Gastrocnemius medialis (tissue), 4 donors: ENCODE measurements at regions of chr18 and their contacts with region 1.

Region 1: DNA sequence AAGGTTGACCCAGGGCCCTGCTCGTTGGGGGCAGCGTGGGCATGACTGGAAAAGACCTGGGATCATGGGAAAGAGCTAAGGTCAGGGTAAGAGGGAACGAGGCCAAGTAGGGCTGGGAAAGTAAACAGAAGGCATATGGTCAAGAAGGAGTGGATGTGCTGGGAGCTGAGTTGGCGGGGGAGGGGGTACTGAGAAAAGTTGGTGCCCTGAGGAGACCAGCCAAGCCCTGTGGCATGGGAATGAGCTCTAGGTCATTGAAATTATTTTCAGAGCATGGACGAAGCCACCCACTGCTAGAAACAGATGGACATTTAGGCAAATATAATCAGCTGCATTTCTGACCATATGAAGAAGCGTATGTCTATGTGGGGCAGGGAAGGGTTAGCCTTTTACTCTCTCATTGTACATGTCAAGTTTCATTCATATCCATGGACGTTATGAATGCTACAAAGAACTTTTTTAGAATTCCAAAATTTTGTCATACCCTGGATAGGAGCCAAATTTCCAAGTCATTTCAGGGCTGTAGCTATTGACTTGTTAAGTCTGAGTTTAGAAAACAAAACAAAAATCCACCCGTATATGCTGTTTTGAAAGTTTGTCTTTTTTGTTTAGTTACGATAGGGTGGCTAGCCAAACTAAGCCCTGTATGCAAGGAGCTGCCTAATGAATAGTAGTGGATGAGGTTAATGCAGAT is 19.1 kb downstream of the MAPRE2 start:
- DNase-seq: peak; percentile 17 to 27
- ATAC-seq: peak; percentile 15 to 34
- H3K4me3 ChIP-seq: no peak overlapping the region
- H3K27ac ChIP-seq: peak overlapping the region; percentile 67 to 90 (median 83)
- H3K4me1 ChIP-seq: peaks cover 39 to 63% of the 10 kb centered on the region in 2 donors
- H3K27me3 ChIP-seq: no peaks in the 10 kb centered on the region
- CTCF ChIP-seq: no peak
- POLR2A ChIP-seq: no peak

Region 2: GRCh38 chr18:34901299-34901698 is 159.0 kb before region 1 on chr18:
- in situ Hi-C with region 1: no loop called
- intact Hi-C with region 1: no loop called
- DNase-seq: no peak
- ATAC-seq: peak; percentile 72 to 90
- H3K4me3 ChIP-seq: no peak overlapping the region
- H3K27ac ChIP-seq: peak overlapping the region; percentile 1 to 44 (median 18)
- H3K4me1 ChIP-seq: no peaks in the 10 kb centered on the region
- H3K27me3 ChIP-seq: no peaks in the 10 kb centered on the region
- CTCF ChIP-seq: peak in 3 of 5 experiments; percentile 32 to 36 (median 34)
- POLR2A ChIP-seq: no peak

Region 3: GRCh38 chr18:35071819-35072247 is 11.6 kb after region 1 on chr18:
- in situ Hi-C with region 1: no loop called
- intact Hi-C with region 1: loop called (anchors 1 kb)
- DNase-seq: peak in 1 of 2 donors; percentile 51
- ATAC-seq: peak; percentile 77 to 85
- H3K4me3 ChIP-seq: no peak overlapping the region
- H3K27ac ChIP-seq: peak overlapping the region; percentile 64 to 90 (median 80)
- H3K4me1 ChIP-seq: peaks cover 52 to 60% of the 10 kb centered on the region in 2 donors
- H3K27me3 ChIP-seq: no peaks in the 10 kb centered on the region
- CTCF ChIP-seq: no peak
- POLR2A ChIP-seq: no peak

Region 4: DNA sequence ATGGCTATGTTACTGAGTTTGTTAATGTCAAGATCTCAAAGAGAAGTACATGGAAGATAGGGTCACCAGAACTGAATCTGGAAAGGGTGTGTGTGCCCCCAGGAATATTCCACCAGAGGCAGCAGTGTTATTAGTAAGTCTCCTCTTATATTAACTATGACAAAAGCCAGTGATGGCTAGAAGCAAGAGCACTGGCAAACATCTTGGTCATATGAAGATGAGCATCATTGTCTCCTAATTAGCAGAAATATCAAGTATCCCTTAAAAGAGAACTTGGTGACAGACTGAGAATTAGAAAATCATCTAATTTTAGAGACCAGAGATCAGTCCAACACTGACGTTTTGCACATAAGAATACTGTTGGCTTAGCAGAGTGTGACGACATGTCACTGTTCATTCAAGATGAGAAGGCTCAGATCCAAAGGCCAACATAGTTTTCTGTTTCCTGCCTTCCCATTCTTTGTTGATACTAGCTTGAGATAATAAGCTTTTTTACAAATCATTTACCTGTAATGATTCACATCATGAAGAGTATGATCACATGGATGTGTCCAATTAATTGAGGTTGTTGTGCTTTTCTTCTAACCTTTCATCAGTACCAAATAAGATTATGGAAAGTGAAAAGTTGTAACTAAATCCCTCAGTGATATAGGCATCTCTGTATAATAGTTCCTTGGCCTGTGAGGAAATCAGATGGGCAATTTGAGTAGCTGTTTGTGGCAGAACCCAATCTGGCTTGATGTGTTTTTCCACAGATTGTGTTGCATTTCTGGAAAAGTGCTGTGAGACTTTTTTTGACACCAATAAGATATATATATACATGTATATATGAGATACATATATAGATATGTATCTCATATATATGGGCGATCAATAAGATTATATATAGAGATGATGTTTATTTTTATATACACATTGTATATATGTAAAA is 25.4 kb after region 1 on chr18:
- in situ Hi-C with region 1: no loop called
- intact Hi-C with region 1: loop called (anchors 2 kb)
- DNase-seq: peak in 1 of 2 donors; percentile 28
- ATAC-seq: peak; percentile 74 to 75
- H3K4me3 ChIP-seq: no peak overlapping the region
- H3K27ac ChIP-seq: peak overlapping the region; percentile 83 to 87 (median 84)
- H3K4me1 ChIP-seq: peaks cover 73 to 76% of the 10 kb centered on the region in 2 donors
- H3K27me3 ChIP-seq: no peaks in the 10 kb centered on the region
- CTCF ChIP-seq: peak in 1 of 5 experiments; percentile 23
- POLR2A ChIP-seq: peak; percentile 15 to 31